GM13977 (cell line): ENCODE measurements at regions of chr9 and their contacts with region 1.

Region 1: DNA sequence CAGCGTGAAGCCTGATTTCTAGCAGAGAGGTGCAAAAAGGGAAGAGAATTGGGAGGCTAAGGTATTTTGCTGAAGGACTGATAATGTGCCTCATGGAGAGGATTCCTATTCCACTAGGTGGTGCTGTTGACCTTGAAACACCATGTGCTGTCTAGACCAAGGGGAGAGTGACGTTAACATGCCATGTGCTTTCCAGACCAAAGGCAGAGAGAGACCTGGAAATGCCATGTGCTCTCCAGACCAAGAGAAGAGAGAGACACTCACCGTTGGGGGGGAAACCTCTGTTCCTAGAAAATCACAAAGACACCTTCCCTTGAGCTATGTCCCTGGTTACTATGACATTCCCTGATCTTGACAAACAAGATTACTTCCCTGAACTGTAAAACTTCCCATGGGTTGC is 286.0 kb upstream of the TUSC1 start:
- DNase-seq: peak; percentile 29
- CTCF ChIP-seq: peak; percentile 85

Region 2: DNA sequence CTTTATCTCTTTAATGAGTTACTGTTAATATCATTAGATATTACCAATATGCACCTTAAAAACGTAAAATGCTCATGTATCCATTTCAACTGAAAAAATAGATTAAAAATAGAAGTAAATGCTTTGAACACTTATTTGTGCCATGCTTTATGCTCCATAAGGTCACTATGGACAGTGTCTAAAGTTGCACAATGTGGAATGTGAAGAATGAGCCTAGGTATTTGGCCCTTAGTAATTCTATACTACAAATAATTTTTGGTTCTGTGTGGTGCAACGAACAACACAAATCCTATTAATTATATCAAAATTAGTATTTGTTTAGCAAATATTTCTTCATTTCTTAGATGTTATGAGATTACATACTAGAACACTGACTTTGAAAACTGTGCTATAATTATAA is 183.9 kb after region 1 on chr9:
- in situ Hi-C with region 1: no loop called
- DNase-seq: no peak
- CTCF ChIP-seq: no peak

Region 3: GRCh38 chr9:26324786-26325443 is 360.7 kb after region 1 on chr9:
- in situ Hi-C with region 1: loop called (anchors 5 kb)
- DNase-seq: no peak
- CTCF ChIP-seq: no peak

Region 4: GRCh38 chr9:26604076-26604662 is 639.9 kb after region 1 on chr9:
- in situ Hi-C with region 1: loop called (anchors 25 kb)
- DNase-seq: no peak
- CTCF ChIP-seq: no peak